ENCODE measurements at regions of chr12 and their contacts with region 1.

Region 1: GRCh38 chr12:31728917-31729640 is at the start of gene AMN1:
- DNase-seq: peak; percentile 99
- ATAC-seq: peak; percentile 92
- H3K4me3 Mint-ChIP-seq: peak within 1 kb of the TSS; percentile 89
- H3K27ac Mint-ChIP-seq: peak within 1 kb of the TSS; percentile 99
- H3K4me1 Mint-ChIP-seq: peaks cover 52% of the 10 kb centered on the region
- H3K27me3 Mint-ChIP-seq: no peaks in the 10 kb centered on the region
- total RNA-seq, gene AMN1: 5.1 to 5.8 TPM

Region 2: DNA sequence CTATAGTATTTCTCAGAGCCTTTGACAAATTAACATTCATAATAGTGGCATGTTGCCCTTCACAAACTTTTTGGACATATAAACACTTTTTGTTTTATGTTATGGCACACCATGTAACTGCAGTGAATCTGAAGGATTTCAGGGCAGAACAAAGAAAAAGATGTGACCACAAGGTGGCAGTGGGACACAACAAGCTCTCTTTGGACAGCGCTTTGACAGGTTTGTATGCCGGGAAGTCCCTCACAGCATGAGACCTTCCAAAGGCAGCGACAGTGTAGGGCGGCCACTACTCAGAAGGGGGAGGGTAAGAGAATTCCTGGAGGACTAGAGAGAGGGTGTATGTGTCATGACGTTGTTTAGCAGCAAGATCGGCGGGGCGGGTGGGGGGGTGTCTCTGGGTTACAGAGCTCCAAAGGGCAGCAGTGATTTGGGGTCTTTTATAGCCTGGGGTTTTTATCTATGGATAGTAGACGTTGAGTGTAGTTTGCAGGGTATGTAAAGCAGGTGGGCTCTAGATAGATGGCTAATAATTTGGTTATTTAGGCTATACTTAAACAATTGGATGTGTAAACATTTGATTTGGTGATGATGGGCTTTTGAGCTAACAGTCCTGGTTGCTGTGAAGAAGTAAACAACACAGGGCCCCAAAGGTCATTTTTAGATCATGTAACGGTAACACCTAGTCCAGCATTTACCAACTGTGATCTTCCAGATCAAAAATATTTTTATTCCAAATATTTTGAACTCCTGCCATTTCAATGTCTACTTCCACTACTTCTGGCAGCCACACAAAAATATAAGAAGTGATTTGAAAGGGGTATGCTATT is 46.7 kb before region 1 on chr12:
- CTCF ChIA-PET with region 1: no interaction called
- POLR2A ChIA-PET with region 1: no interaction called
- intact Hi-C with region 1: no loop called
- DNase-seq: peak; percentile 76
- ATAC-seq: peak; percentile 95
- H3K4me3 Mint-ChIP-seq: no peak overlapping the region
- H3K27ac Mint-ChIP-seq: peak overlapping the region; percentile 53
- H3K4me1 Mint-ChIP-seq: peaks cover 6% of the 10 kb centered on the region
- H3K27me3 Mint-ChIP-seq: no peaks in the 10 kb centered on the region

Region 3: DNA sequence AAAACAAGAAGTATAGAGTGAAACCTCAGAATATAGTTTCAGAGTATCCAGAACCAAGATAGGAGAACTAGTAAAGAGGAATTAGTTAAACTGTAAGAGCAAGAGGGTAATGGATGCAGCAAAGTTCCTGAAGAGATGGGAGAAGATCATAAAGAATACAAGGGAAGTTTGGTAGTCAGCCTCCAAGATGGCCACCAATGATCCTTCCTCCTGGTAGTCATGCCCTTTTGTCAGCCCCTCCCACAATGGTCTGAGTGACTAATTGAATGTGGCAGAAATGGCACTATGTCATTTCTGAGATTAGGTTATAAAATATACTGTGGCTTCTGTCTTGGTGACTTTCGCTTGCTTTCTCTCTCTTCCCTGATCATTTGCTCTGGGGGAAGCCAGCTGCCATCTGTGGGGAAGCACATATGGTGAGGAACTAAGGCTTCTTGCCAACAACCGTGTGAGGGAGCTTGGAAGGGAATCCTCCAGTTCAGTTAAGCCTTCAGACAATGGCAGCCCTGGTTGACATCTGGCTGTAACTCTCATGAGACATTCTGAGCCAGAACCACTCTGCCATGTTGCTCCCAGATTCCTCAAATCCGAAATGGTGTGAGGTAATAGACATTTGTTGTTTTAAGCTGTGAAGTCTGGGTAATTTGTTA is 55.0 kb after region 1 on chr12:
- CTCF ChIA-PET with region 1: no interaction called
- POLR2A ChIA-PET with region 1: no interaction called
- intact Hi-C with region 1: no loop called
- DNase-seq: no peak
- ATAC-seq: no peak
- H3K4me3 Mint-ChIP-seq: no peak overlapping the region
- H3K27ac Mint-ChIP-seq: no peak overlapping the region
- H3K4me1 Mint-ChIP-seq: no peaks in the 10 kb centered on the region
- H3K27me3 Mint-ChIP-seq: no peaks in the 10 kb centered on the region

Region 4: GRCh38 chr12:31804185-31804504 is 75.1 kb after region 1 on chr12:
- CTCF ChIA-PET with region 1: no interaction called
- POLR2A ChIA-PET with region 1: no interaction called
- intact Hi-C with region 1: loop called (anchors 2 to 5 kb)
- DNase-seq: no peak
- ATAC-seq: peak; percentile 66
- H3K4me3 Mint-ChIP-seq: peak overlapping the region; percentile 46
- H3K27ac Mint-ChIP-seq: peak overlapping the region; percentile 7
- H3K4me1 Mint-ChIP-seq: peaks cover 44% of the 10 kb centered on the region
- H3K27me3 Mint-ChIP-seq: no peaks in the 10 kb centered on the region

Region 5: GRCh38 chr12:31874961-31875608 is 146.0 kb after region 1 on chr12:
- CTCF ChIA-PET with region 1: no interaction called
- POLR2A ChIA-PET with region 1: no interaction called
- intact Hi-C with region 1: loop called in 1 of 2 experiments (anchors 5 kb)
- DNase-seq: peak; percentile 84
- ATAC-seq: peak; percentile 98
- H3K4me3 Mint-ChIP-seq: peak overlapping the region; percentile 49
- H3K27ac Mint-ChIP-seq: peak overlapping the region; percentile 99
- H3K4me1 Mint-ChIP-seq: peaks cover 25% of the 10 kb centered on the region
- H3K27me3 Mint-ChIP-seq: no peaks in the 10 kb centered on the region